ENCODE measurements at regions of chr11 and their contacts with region 1.

Region 1: DNA sequence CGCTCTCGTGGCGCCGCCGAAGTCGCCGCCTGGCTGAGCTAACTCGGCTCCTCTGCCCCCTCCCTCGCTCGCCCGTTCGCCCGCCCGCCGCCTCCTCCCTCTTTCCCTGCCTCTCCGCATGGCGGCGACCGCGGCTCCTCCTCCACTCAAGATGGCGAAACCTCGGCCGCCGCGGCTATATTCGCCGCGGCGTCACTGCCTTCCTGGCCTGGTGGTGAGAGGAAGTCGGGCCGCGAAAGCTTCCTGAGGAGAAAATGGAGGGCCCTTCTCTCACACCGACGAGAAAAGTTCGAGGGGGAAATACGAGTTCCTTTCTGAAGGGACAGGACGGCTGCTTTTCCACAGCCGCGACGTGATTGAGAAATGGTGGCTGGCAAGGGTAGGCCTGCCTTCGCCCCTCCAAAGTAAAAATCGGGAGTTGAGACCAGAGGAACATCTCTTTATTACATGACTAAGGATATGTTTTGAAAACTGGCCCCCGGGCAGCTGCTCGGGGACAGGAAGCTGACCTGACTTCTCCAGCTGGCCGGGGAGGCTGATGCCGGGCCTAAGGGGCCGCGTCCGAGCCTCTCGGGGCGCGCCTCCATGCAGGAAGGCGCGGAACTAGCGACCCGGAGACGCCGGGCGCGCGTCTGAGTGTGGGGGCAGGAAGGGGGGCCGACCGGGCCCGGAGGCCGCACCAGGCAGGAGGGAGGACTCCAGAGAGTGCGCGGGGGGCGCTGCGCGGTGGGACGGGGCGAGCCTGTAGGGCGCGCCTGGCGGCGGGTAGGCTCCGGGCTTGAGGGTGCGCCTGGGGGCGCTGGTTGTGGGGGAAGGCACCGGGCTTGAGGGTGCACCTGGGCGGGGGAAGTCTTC is at the start of gene DDX6:
- DNase-seq: peak; percentile 63
- H3K4me3 ChIP-seq: peak within 1 kb of the TSS; percentile 93
- CTCF ChIP-seq: peak; percentile 15

Region 2: GRCh38 chr11:118522571-118523072 is 268.7 kb before region 1 on chr11:
- in situ Hi-C with region 1: no loop called
- DNase-seq: no peak
- H3K4me3 ChIP-seq: no peak overlapping the region
- CTCF ChIP-seq: peak; percentile 54

Region 3: GRCh38 chr11:118652681-118653181 is 138.6 kb before region 1 on chr11:
- in situ Hi-C with region 1: no loop called
- DNase-seq: no peak
- H3K4me3 ChIP-seq: no peak overlapping the region
- CTCF ChIP-seq: no peak

Region 4: DNA sequence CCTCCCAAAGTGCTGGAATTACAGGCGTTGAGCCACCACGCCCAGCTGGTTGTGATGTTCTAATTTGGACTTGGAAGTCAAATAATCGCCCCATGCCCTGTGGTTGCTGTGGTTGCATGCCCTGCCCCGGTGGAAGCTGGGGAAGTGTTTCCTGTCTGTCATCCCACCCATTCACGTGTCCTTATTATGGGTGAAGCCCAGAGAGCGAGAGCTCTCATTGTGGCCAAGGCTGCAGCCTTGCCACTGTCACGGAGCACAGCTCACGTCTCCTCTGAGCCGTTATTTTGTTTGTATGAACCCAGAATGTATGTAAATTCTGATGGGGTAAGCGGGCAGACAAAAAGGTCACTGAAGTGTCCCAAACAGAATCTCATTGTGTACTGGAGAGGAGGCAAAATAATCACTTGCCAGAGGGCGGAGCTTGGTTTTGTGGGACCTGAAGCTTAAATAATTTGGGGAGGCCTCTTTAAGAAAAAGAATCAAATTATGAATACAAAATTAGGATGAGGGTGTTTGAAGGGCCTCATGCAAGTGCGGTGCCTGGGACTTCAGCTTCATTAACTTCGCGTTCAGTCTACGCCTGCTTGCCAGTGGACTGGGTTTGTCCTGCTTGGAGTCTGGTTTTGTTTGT is 86.1 kb before region 1 on chr11:
- in situ Hi-C with region 1: loop called (anchors 10 kb)
- DNase-seq: no peak
- H3K4me3 ChIP-seq: no peak overlapping the region
- CTCF ChIP-seq: no peak

Region 5: DNA sequence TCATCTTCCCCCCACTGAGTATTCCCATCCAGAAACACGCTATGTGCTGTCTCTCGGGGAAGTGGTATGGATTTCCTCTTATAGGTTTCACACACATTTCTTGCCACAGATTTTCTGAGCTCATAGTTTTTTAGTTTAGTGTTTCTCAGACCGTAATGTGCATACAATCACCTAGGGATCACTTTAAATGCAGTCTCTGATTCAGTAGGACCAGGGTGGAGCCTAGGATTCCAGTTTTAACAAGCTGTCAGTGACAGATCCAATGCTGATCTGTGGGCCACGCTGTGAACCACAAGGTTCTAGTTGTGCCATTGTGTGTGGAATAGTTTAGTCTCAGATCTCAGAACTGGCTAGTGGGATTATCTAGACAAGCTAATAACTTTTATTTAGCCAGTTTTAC is 68.6 kb after region 1 on chr11:
- in situ Hi-C with region 1: loop called (anchors 10 kb)
- DNase-seq: no peak
- H3K4me3 ChIP-seq: no peak overlapping the region
- CTCF ChIP-seq: no peak

Region 6: DNA sequence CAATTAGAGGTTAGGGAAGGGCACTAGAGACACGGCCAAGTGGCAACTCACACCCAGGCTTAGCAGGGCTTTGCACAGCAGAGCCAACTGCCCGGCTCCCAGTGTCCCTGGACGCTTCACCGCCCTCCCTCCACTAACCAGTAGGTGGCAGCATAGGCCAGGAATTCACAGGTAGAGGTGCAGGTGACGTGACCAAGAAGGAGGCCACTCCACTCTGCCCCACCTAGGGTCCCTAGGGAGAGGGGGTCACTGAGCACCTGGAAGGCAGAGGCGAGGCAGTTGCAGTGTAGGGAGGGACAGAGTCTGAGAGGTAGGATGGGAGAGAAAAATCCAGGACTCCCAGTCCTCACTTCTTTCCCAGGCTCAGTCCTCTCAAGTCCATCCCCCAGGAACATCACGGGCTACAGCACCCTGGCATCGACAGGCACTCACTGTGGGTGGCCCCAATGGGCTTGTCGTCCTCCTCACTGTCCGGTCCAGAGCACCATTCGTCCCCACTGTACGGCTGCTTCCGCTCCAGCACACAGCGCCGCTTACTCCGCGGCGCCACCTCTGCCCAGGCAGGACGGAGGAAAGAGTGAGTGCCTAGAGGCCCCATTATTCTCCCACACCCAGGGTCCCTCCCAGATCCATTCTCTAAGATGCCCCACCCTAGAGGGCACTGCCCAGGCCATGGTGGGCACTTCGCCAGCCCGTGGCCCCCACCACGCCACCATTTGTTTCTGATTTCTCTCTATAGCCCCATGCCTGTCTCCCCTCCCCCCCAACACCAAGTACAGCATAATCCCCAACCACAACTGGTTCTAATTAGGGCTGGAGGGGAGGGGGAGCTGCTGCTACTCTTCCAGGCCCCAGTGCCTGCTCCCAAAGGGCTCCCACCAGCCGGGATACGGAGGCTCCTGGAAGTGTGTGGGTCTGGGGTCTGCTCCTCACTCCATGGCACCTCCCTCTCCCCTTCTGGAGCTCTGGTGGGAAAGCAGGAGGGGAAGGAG is 116.0 kb after region 1 on chr11:
- in situ Hi-C with region 1: loop called (anchors 10 kb)
- DNase-seq: no peak
- H3K4me3 ChIP-seq: no peak overlapping the region
- CTCF ChIP-seq: peak; percentile 85